GM10248 (cell line): ENCODE measurements at regions of chr12 and their contacts with region 1.

Region 1: DNA sequence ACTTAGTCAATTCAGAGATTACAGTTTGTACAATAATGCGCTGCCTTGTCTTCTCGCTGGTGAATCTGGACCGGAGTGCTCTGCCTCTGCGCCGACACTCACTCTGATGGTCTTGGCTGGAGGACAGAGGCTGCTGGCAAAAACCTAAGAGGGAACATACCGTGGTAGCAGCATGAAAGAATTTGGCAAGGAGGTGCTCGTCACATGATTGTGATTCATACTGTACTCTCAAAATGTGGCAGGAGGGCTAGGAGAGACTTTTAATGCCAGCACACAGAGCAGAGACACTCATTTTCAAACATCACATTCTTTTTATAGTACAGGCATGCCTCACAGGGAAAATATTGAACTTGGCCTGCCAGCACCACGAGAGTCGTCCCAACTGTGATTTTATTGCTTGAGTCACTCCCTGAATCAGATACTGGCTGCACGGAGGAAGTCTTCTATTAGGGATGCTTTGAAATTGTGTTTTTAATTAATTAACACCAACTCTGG is 67.8 kb downstream of the HMGA2 start:
- DNase-seq: no peak
- CTCF ChIP-seq: no peak

Region 2: DNA sequence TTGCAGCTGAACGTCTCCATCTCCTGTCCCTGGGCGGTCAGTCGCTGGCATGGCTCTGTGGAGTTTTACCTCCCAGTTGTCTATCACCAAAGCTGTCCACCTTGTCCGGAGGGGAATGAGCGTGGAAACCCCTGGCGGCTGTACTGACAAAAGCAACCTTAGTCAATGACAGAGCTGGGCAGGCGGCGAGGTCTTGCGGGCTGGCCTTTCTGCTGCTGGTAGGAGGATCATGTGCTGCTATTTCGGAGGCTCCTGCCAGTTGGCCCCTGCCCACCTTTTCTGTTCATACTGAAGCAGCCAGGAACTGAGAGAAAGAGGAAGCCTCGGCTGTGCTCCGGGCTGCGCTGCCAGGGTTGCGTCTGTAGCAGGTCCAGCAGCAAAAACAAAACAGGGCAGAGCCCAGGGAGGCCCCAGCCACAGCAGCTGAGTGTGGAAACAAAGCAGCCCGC is 10.0 kb before region 1 on chr12:
- CTCF ChIA-PET with region 1: interaction called, 20 read pairs
- POLR2A ChIA-PET with region 1: no interaction called
- DNase-seq: peak; percentile 43
- CTCF ChIP-seq: peak; percentile 30

Region 3: DNA sequence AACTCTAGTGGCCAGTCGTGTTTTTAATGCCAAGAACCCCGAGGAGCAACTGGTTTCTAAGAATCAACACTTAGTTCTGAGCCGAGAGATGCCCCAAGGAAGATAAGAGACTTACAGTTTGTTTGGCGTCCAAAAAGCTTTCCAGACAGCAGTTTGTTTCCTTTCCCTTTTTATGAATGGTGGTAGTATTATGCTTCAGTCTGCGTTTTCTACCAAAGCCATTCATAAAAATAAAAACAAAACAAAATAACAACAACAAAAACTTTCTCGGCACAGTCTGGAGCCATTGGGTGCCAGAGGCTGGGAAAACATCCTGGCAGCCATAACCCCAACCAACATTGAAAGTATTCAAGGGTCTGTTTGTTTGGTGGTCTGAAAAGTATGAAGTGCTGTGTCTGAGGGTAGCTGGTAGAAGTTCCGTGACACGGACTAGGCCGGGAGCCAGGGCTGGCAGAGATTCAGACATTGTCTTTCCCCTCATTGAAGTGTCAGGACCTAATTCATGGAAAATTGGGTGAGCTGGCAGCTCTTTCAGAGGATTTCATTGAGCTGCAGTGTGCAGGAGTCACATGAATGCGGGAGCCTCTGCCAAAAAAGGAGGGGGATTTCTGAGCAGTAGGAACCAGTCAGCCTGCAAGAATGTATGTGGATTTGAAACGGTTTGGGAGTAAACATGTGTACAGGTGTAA is 56.4 kb after region 1 on chr12:
- CTCF ChIA-PET with region 1: no interaction called
- POLR2A ChIA-PET with region 1: no interaction called
- DNase-seq: no peak
- CTCF ChIP-seq: no peak